Naive thymus-derived CD8-positive, alpha-beta T cell (primary cell): ENCODE measurements at regions of chr14 and their contacts with region 1.

Region 1: GRCh38 chr14:100567009-100567876 is 20.0 kb downstream of the BEGAIN start:
- DNase-seq: no peak
- ATAC-seq: peak; percentile 54 to 59
- H3K4me3 Mint-ChIP-seq: peak overlapping the region; percentile 4 to 79 (median 62)
- H3K27ac Mint-ChIP-seq: no peak overlapping the region
- H3K4me1 Mint-ChIP-seq: peaks cover 3 to 8% (median 6%) of the 10 kb centered on the region in 4 donors
- H3K27me3 Mint-ChIP-seq: peaks cover 0 to 50% (median 20%) of the 10 kb centered on the region in 5 donors

Region 2: DNA sequence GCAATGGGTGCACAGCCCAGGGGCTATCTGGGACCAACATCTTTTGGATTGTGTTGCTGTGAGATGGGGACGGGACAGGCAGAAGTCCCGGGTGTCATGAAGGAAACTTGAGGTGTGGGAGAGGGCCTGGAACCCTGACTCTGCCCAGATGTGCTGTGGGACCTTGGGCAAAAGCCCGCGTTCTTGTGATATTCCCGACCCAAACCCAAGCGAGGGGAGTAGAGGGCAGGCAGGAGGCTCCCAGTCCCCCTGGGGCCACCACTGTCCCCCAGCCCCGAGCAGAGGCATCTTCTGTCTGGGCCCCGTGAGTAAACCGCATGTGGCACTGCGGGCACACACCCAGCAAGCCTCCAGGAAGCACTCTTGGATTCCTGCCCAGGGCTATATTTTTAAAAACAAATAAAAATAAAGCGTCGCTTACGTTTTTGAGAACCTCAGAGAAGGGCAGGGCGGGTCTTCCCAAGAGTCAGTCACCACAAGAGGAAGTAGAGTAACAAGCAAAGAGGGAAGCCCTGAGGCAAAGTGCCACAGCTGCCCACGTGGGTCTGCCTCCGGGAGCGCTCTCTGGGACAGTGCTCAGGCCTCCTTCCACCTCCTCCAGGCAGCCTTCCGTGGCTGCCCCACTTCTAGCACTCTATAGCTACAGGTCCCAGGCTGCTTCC is 19.5 kb before region 1 on chr14:
- POLR2A ChIA-PET with region 1: interaction called, 17 read pairs
- DNase-seq: peak; percentile 19 to 89 (median 52)
- ATAC-seq: peak; percentile 63 to 73
- H3K4me3 Mint-ChIP-seq: peak overlapping the region; percentile 66 to 89 (median 85)
- H3K27ac Mint-ChIP-seq: peak overlapping the region; percentile 36 to 97 (median 93)
- H3K4me1 Mint-ChIP-seq: peaks cover 10 to 33% (median 31%) of the 10 kb centered on the region in 4 donors
- H3K27me3 Mint-ChIP-seq: no peaks in the 10 kb centered on the region

Region 3: DNA sequence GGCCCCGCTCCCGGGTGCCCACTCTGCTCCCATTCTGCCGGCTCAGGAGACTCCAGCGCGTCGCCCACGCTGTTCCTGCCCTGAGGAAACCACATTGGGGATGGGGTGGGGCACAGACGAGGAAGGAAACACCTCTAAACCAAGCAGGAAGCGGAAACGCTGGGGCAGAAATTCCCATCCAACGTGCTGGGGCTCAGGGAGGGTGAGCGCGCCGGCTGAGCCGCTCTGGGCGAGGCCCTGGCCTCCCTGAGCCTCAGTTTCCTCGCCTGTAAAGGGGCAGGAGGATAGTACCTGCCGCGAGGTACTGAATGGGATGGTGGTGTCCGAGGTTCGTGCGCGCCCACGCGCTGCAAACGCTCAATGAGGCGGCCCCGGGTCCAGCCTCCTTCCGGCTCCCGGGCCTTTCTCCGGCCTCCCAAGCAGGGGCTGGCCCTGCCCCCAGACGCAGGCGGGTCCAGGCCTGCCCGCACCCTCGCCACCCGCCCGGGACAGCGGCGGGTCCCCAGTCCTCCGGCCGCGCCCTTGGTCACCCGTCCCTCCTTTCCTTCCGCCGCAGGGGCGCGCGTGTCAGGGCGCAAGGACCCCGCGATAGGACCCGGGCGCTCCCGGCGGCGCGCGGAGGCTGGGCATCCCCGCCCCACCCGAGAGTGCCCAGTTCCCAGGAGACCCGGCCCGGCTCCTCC is 19.3 kb after region 1 on chr14:
- POLR2A ChIA-PET with region 1: no interaction called
- DNase-seq: peak in 1 of 10 donors; percentile 35
- ATAC-seq: peak; percentile 32
- H3K4me3 Mint-ChIP-seq: peak overlapping the region in 9 of 10 donors; percentile 48 to 71 (median 65)
- H3K27ac Mint-ChIP-seq: peak overlapping the region in 1 of 10 donors; percentile 56
- H3K4me1 Mint-ChIP-seq: peaks cover 0 to 6% (median 4%) of the 10 kb centered on the region in 4 donors
- H3K27me3 Mint-ChIP-seq: peaks cover 13 to 37% (median 25%) of the 10 kb centered on the region in 5 donors